Heart left ventricle (tissue), 16 donors: ENCODE measurements at regions of chr12 and their contacts with region 1.

Region 1: DNA sequence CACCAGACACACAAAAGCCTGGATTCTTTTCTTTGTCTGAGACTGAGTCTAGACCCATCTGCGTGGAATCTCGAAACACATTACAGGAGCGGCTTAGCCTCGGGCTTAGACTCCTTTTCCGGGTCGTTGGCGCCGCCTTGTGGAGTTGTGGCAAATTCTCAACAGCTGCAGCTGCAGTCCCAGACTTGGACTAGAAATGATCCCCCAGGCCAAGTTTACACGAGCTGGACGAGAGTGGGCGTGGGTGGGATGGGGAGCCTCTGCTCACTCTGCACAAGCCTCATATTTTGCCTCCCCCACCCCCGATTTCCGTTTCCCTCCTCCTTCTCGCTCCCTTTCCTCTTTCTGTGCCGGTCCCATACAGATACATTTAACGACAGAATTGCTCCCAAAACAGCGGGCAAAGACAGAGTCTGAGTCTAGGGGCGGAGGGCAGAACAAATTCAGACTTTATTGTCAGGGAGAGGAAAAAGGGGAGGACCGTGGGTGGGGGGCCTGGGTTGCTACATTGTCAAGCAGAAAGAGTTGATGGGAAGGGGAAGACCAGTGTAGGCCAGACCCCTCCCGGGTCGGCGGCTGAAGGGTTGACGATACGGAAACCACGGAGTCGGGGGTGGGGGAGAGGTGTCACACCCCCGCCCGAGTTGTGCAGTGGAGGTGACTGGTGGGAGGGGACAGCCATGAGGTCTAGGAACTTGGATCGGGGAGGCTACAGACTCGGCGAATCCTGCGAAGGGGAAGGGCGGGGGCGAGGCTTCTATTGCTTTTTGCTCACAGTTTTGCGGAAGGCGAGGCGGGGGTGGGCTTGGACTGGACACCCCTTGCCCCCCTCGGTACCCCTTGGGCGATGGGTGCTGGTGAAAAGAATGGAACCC is 4.7 kb upstream of the GPR84 start:
- DNase-seq: peak; percentile 90 to 94 (median 91)
- ATAC-seq: peak; percentile 56 to 76 (median 66)
- H3K4me3 ChIP-seq: peak overlapping the region in 11 of 12 donors; percentile 26 to 62 (median 50)
- H3K27ac ChIP-seq: peak overlapping the region in 10 of 12 donors; percentile 64 to 84 (median 76)
- H3K4me1 ChIP-seq: peaks cover 0 to 67% (median 35%) of the 10 kb centered on the region in 12 donors
- H3K27me3 ChIP-seq: no peaks in the 10 kb centered on the region
- CTCF ChIP-seq: peak; percentile 68 to 87 (median 80)
- POLR2A ChIP-seq: no peak

Region 2: GRCh38 chr12:54214553-54215406 is 154.2 kb before region 1 on chr12:
- intact Hi-C with region 1: loop called in 1 of 10 experiments (anchors 5 kb)
- DNase-seq: peak; percentile 86 to 91 (median 89)
- ATAC-seq: peak; percentile 77 to 91 (median 86)
- H3K4me3 ChIP-seq: peak overlapping the region in 6 of 12 donors; percentile 18 to 47 (median 33)
- H3K27ac ChIP-seq: no peak overlapping the region
- H3K4me1 ChIP-seq: peaks cover 9 to 38% (median 21%) of the 10 kb centered on the region in 12 donors
- H3K27me3 ChIP-seq: peaks cover 0 to 40% (median 27%) of the 10 kb centered on the region in 9 donors
- CTCF ChIP-seq: peak; percentile 94 to 100 (median 96)
- POLR2A ChIP-seq: no peak

Region 3: DNA sequence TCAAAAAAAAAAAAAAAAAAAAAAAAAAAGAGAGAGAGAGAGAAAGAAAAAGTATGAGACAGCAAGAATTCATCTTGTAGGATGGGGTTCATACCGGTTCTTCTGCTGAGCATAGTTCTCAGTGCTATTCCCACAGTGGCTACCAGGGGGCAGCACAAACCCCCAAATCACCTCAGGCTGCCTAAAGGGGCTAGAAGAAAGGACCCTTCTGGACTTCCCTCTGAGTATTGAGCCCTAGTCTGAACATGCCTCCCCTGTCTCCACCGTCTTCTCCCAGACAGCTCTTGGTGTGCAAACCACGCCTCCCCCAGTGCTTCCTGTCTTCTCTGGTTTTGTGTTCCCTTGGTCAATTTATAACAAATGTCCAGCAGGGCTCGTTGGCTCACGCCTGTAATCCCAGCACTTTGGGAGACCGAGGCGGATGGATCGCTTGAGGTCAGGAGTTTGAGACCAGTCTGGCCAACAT is 148.8 kb before region 1 on chr12:
- intact Hi-C with region 1: loop called in 5 of 10 experiments (anchors 2 to 5 kb)
- DNase-seq: peak in 4 of 5 donors; percentile 49 to 66 (median 56)
- ATAC-seq: peak in 3 of 4 donors; percentile 62 to 72 (median 72)
- H3K4me3 ChIP-seq: peak overlapping the region in 1 of 12 donors; percentile 7
- H3K27ac ChIP-seq: no peak overlapping the region
- H3K4me1 ChIP-seq: peaks cover 8 to 34% (median 19%) of the 10 kb centered on the region in 12 donors
- H3K27me3 ChIP-seq: peaks cover 0 to 18% (median 3%) of the 10 kb centered on the region in 9 donors
- CTCF ChIP-seq: peak; percentile 69 to 88 (median 75)
- POLR2A ChIP-seq: no peak

Region 4: DNA sequence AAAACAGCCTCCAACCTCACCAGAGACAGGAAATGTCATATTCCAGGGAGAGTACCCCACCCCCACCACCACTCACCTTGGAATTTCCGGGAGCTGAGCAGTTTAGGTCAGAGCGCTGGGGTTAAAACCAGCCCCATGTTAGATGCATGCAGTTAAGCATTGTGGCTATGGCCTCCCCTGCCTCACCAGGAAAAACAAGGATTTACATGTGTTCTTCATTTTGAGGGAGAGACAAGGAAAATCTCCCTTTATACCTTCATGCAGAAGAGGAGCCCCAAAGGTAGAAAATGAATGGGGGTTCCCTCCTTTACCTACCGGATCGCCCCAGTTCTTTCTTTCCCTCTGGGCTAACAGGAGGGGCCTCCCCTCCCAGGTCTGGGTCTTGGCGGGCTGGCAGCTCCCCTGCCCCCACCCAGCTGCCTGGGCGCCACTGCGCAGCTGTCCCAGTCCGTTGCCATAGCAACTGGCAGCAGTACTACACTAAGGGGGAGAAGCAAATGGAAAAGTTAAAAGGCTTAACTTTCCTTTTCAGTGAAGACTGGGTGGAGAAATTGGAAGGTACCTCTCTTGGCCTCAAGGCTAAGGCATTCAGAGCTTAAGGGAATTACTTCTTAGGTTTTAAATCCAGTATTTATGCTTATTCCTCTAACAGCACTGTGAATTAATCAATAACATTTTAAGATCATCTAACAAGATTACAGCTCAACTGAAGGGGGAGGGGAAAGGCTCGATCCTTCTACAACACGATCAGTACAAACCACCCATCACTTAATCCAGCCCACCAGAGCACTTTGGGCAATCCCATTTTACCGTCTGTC is 109.5 kb before region 1 on chr12:
- intact Hi-C with region 1: loop called in 2 of 10 experiments (anchors 10 kb)
- DNase-seq: peak; percentile 79 to 85 (median 85)
- ATAC-seq: peak; percentile 86 to 95 (median 92)
- H3K4me3 ChIP-seq: peak overlapping the region; percentile 12 to 59 (median 51)
- H3K27ac ChIP-seq: peak overlapping the region; percentile 7 to 97 (median 81)
- H3K4me1 ChIP-seq: peaks cover 2 to 64% (median 48%) of the 10 kb centered on the region in 12 donors
- H3K27me3 ChIP-seq: no peaks in the 10 kb centered on the region
- CTCF ChIP-seq: no peak
- POLR2A ChIP-seq: no peak

Region 5: DNA sequence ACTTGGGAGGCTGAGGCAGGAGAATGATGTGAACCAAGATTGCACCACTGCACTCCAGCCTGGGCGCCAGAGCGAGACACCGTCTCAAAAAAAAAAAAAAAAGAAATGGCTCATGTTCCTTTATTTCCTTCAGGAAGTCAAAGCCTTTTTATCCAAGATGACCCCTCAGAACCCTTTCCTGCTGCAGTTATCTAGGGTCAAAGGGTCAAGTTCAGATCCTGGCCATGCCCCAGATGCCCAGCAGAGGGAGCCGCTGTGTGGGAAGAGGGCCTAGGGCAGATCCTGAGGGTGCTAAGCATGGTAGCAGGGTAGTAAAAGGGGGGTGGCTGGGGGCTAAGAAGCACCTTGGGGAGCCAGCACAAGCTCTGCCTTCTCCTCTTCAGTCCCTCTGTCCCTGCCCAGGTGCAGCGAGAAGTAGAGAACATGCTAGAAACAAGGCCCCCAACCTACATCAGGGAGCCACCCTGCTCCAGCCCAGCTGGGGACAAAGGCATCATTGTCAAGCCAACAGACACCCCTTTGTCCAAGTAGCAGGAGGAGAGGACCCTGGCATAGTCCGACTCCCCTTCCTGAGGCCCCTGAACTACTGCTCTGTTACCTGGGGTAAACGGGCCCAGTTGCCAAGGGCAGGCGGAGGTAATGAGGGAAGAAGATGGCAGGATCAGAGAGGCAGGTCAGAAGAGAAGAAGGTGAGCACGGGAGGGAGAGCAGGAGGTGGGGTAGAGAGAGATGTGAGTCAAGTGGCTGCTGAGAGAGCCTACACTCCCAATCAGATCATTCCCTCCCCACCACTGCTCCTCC is 74.6 kb before region 1 on chr12:
- intact Hi-C with region 1: loop called in 3 of 10 experiments (anchors 5 to 10 kb)
- DNase-seq: peak; percentile 35 to 74 (median 43)
- ATAC-seq: peak in 3 of 4 donors; percentile 51 to 65 (median 61)
- H3K4me3 ChIP-seq: no peak overlapping the region
- H3K27ac ChIP-seq: no peak overlapping the region
- H3K4me1 ChIP-seq: peaks cover 0 to 40% (median 0%) of the 10 kb centered on the region in 12 donors
- H3K27me3 ChIP-seq: peaks cover 0 to 10% (median 4%) of the 10 kb centered on the region in 9 donors
- CTCF ChIP-seq: peak; percentile 45 to 68 (median 54)
- POLR2A ChIP-seq: no peak

Region 6: GRCh38 chr12:54379401-54380201 is 10.7 kb after region 1 on chr12:
- intact Hi-C with region 1: loop called in 1 of 10 experiments (anchors 1 kb)
- DNase-seq: peak; percentile 92 to 96 (median 93)
- ATAC-seq: peak; percentile 80 to 90 (median 83)
- H3K4me3 ChIP-seq: peak overlapping the region in 11 of 12 donors; percentile 10 to 75 (median 54)
- H3K27ac ChIP-seq: peak overlapping the region in 11 of 12 donors; percentile 49 to 84 (median 80)
- H3K4me1 ChIP-seq: peaks cover 0 to 63% (median 19%) of the 10 kb centered on the region in 12 donors
- H3K27me3 ChIP-seq: no peaks in the 10 kb centered on the region
- CTCF ChIP-seq: peak in 11 of 12 donors; percentile 100
- POLR2A ChIP-seq: peak in 1 of 2 donors; percentile 9

Region 7: DNA sequence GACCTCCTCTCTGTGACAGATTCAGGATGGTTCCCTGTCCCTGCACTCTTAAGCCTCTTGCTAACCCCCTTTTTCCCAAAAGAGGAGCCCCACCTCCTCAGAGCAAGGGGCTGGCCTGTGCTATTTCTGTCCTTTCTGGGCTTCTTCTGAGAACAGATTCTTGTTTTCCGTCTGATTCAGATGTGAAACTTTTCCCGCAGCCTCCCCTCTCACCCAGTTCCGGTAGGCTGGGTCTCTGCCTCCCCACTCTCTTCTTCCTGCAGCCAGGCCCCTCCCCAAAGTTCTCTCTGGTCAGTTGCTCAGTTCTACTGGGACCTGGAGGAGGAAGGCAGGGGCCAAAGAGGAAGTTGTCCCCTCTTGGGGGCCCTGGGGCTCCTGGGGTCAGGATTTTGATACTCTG is 192.2 kb after region 1 on chr12:
- intact Hi-C with region 1: no loop called
- DNase-seq: peak in 4 of 5 donors; percentile 57 to 71 (median 70)
- ATAC-seq: peak; percentile 40 to 65 (median 56)
- H3K4me3 ChIP-seq: peak overlapping the region in 11 of 12 donors; percentile 7 to 58 (median 49)
- H3K27ac ChIP-seq: peak overlapping the region; percentile 26 to 90 (median 80)
- H3K4me1 ChIP-seq: peaks cover 0 to 22% (median 4%) of the 10 kb centered on the region in 12 donors
- H3K27me3 ChIP-seq: peaks cover 0 to 17% (median 5%) of the 10 kb centered on the region in 9 donors
- CTCF ChIP-seq: no peak
- POLR2A ChIP-seq: no peak